ENCODE measurements at regions of chr10 and their contacts with region 1.

Region 1: GRCh38 chr10:114103284-114103683 is 59.6 kb downstream of the ADRB1 start:
- ATAC-seq: peak; percentile 41 to 81 (median 68)
- H3K4me3 ChIP-seq: no peak overlapping the region
- H3K27ac ChIP-seq: no peak overlapping the region
- H3K4me1 ChIP-seq: no peaks in the 10 kb centered on the region

Region 2: GRCh38 chr10:113704637-113705343 is 398.5 kb before region 1 on chr10:
- in situ Hi-C with region 1: loop called in 6 of 9 experiments (anchors 10 to 25 kb)
- ATAC-seq: peak; percentile 52 to 63 (median 56)
- H3K4me3 ChIP-seq: no peak overlapping the region
- H3K27ac ChIP-seq: no peak overlapping the region
- H3K4me1 ChIP-seq: peaks cover 9 to 14% of the 10 kb centered on the region in 2 donors

Region 3: GRCh38 chr10:113788604-113789083 is 314.6 kb before region 1 on chr10:
- in situ Hi-C with region 1: loop called in 3 of 9 experiments (anchors 10 to 25 kb)
- ATAC-seq: peak in 4 of 8 experiments; percentile 12 to 79 (median 49)
- H3K4me3 ChIP-seq: no peak overlapping the region
- H3K27ac ChIP-seq: no peak overlapping the region
- H3K4me1 ChIP-seq: peaks cover 0 to 4% of the 10 kb centered on the region in 2 donors

Region 4: DNA sequence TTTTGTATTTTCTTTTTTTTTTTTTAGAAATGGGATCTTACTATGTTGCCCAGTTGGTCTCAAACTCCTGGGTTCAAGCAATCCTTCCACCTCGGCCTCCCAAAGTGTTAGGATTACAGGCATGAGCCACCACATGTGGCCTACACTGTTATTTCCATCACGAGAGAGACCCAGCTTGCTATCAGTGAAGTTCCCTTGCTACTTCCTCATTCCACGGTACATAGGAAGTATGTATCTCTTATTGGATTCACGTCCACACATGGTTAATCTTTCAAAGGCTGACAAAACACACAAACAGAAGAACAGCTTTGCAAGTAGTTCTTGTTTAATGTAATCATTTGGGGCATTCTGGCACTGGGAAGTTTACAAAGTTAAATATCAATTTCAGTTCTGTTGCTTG is 300.3 kb before region 1 on chr10:
- in situ Hi-C with region 1: loop called in 5 of 9 experiments (anchors 10 to 25 kb)
- ATAC-seq: no peak
- H3K4me3 ChIP-seq: no peak overlapping the region
- H3K27ac ChIP-seq: no peak overlapping the region
- H3K4me1 ChIP-seq: no peaks in the 10 kb centered on the region

Region 5: GRCh38 chr10:113820507-113820906 is 282.8 kb before region 1 on chr10:
- in situ Hi-C with region 1: loop called in 1 of 9 experiments (anchors 25 kb)
- ATAC-seq: peak in 1 of 8 experiments; percentile 68
- H3K4me3 ChIP-seq: no peak overlapping the region
- H3K27ac ChIP-seq: no peak overlapping the region
- H3K4me1 ChIP-seq: no peaks in the 10 kb centered on the region

Region 6: DNA sequence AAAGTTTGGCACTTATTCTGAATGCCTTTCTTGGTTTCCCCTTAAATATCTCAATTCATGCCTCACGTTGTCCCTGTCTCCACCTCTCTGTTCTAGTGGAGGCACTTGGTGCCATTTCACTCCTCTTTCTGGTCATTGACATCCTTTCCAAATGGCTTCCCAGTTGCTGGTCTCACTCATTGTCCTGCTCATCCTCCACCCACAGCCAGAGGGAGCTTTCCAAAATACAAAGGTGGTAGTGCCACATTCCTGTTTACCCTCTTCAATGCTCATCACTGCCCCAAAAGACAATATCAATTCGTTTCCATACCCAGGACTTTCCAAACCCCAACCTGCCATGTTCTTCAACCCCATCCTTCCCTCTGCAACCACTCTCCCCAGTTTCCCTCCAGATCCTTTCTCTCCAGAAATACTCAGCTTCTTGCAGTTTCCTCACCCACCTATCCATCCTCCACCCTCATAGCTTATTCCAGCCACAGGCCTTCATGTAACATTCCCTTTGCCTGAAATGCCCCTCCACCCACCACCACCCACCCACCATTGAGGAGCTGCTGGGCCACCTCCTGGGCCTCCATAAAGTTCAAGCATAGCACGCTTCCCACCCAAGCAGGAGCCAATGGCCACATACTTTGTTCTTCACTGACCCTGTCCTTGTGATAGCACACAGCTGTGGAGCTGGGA is 122.7 kb before region 1 on chr10:
- in situ Hi-C with region 1: no loop called
- ATAC-seq: no peak
- H3K4me3 ChIP-seq: no peak overlapping the region
- H3K27ac ChIP-seq: no peak overlapping the region
- H3K4me1 ChIP-seq: no peaks in the 10 kb centered on the region

Region 7: DNA sequence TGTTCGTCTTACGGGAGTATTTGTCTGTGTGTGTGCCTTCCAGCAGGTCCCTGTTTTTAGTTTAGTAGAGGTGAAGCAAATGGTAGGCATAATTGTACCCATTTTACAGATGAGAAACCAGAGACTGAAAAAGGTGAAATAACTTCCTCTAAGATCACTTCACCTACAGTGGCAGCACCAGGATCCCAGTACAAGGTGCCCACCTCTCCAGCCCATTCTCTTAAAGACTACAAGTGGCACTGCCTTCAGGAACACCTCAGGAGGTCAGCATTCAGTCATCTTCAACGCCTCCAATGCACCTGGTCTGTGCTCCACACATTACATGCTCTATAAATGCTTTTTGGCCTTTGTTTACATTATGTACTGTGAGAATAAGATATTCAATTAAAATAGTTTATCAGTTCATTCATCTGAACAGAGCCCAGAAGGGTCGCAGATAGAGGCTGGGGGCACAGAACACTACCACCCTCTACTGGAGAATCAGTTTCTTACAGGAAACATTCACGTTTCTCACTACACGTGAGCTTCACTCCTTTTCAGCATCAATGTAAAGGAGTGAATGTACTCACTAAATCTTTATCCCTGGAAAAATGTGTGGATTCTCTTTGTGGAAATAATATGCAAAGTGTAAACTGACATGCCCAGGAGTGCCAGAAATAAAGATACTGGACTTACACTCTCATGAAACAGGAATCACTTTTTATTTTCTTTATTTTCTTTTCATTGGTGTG is 600.3 kb after region 1 on chr10:
- in situ Hi-C with region 1: no loop called
- ATAC-seq: peak in 3 of 8 experiments; percentile 38 to 81 (median 44)
- H3K4me3 ChIP-seq: no peak overlapping the region
- H3K27ac ChIP-seq: no peak overlapping the region
- H3K4me1 ChIP-seq: peaks cover 0 to 7% of the 10 kb centered on the region in 2 donors

Measured in motor neuron (in vitro differentiated cells).